Endothelial cell of umbilical vein (primary cell): ENCODE measurements at regions of chr11 and their contacts with region 1.

Region 1: DNA sequence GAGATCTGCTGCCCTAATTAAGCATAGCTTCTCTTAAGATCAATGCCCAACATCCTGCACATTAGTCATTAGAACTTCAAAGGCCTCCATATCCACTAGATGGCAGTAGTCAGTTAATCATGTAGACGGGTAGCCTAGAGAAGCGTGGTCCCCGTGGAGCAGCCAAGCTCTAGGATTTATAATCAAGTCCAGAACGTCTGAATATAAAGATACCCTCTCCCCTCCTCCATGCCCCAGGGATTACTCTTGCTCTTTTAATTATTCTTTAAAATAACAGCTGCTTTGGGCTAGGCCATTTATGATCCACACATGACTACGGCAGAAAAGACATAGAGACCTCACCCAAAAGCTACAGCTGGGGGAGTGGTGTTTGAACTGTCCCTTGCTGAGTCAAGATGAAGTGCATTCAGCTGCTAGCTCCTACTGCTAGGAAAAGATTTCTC is 327.6 kb upstream of the PLET1 start:
- DNase-seq: peak; percentile 73
- H3K4me3 ChIP-seq: no peak overlapping the region
- H3K27ac ChIP-seq: no peak overlapping the region
- H3K4me1 ChIP-seq: no peaks in the 10 kb centered on the region
- H3K27me3 ChIP-seq: no peaks in the 10 kb centered on the region
- CTCF ChIP-seq: peak; percentile 50 to 54
- POLR2A ChIP-seq: no peak

Region 2: GRCh38 chr11:112219476-112220232 is 368.6 kb before region 1 on chr11:
- CTCF ChIA-PET with region 1: interaction called, 11 read pairs
- POLR2A ChIA-PET with region 1: no interaction called
- dilution Hi-C with region 1: no loop called
- intact Hi-C with region 1: loop called (anchors 1 kb)
- DNase-seq: peak; percentile 80
- H3K4me3 ChIP-seq: no peak overlapping the region
- H3K27ac ChIP-seq: no peak overlapping the region
- H3K4me1 ChIP-seq: peaks cover 11% of the 10 kb centered on the region
- H3K27me3 ChIP-seq: no peaks in the 10 kb centered on the region
- CTCF ChIP-seq: peak; percentile 57 to 60
- POLR2A ChIP-seq: no peak

Region 3: DNA sequence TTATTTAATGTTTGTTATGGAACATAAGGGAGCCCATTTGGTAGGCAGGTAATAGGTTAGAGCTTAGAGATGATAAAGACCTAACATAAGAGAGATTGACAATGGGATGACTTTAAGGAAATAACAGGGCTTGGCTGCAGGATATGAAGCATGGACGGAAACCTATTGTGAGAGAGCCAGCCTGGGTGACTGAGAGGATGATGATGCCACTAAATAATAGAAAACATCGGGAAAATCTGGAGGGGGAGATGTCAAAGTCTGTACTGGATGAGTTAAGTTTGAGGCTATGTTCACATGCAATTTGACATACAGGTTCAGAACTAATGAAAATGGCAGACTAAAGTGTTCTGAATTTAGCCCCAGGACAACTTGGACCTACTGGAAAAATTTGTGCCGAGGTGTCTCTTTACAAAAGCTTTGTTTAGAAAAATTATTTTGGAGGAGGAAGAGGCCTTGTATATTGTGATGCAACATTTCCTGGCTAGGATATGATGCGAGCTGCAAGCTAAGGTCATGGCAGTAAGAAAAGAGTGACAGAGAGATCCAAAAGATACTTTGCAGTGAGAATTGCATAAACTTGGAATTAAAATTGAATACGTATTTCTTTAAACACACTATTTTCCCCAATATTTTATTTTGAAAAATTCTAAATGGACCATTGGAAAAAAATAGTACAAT is 11.7 kb after region 1 on chr11:
- CTCF ChIA-PET with region 1: interaction called, 13 read pairs
- POLR2A ChIA-PET with region 1: no interaction called
- dilution Hi-C with region 1: no loop called
- intact Hi-C with region 1: no loop called
- DNase-seq: peak; percentile 5
- H3K4me3 ChIP-seq: no peak overlapping the region
- H3K27ac ChIP-seq: no peak overlapping the region
- H3K4me1 ChIP-seq: peaks cover 6% of the 10 kb centered on the region
- H3K27me3 ChIP-seq: peaks cover 2 to 7% of the 10 kb centered on the region in 2 experiments
- CTCF ChIP-seq: no peak
- POLR2A ChIP-seq: no peak

Region 4: GRCh38 chr11:112734207-112734606 is 145.9 kb after region 1 on chr11:
- CTCF ChIA-PET with region 1: no interaction called
- POLR2A ChIA-PET with region 1: no interaction called
- dilution Hi-C with region 1: no loop called
- intact Hi-C with region 1: no loop called
- DNase-seq: no peak
- H3K4me3 ChIP-seq: no peak overlapping the region
- H3K27ac ChIP-seq: no peak overlapping the region
- H3K4me1 ChIP-seq: no peaks in the 10 kb centered on the region
- H3K27me3 ChIP-seq: no peaks in the 10 kb centered on the region
- CTCF ChIP-seq: no peak
- POLR2A ChIP-seq: no peak

Region 5: DNA sequence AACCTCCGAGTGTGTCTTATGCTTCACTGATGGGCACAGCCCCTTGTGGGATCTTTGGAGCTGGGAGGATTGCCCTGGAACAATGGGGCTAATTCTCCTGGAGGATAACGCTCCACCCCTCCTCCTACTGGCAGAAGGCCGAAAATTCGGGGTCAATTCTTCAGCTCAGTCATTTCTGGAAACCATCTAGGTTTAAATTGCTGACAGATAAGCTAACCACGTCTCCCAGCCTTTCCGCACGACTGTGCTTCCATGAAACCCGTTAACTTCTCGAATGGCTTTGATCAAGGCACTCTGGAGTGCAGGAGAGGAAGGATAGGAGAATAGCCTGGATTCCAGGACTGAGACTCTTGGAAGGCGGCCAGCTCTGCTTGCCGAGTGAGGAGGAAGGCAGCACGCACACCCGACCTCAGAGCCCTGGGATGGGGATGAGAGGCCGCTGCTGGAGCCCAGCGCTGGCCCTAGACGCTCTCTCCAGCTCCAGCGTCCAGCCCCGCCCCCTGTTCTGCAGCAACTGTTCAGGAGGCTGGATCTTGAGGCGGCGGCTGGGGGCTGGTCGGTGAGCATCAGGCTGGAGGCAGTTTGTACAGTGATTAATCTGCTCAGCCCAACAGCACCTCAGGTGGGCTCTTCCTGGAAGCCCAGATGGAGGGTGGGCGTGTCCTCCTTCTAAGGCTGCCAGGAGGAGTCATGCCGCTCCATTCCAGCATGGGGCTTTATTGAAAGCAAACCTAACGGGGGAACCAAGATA is 196.2 kb after region 1 on chr11:
- CTCF ChIA-PET with region 1: no interaction called
- POLR2A ChIA-PET with region 1: no interaction called
- dilution Hi-C with region 1: no loop called
- intact Hi-C with region 1: no loop called
- DNase-seq: no peak
- H3K4me3 ChIP-seq: no peak overlapping the region
- H3K27ac ChIP-seq: no peak overlapping the region
- H3K4me1 ChIP-seq: no peaks in the 10 kb centered on the region
- H3K27me3 ChIP-seq: no peaks in the 10 kb centered on the region
- CTCF ChIP-seq: no peak
- POLR2A ChIP-seq: no peak

Region 6: GRCh38 chr11:112795142-112795815 is 207.0 kb after region 1 on chr11:
- CTCF ChIA-PET with region 1: interaction called, 28 read pairs
- POLR2A ChIA-PET with region 1: no interaction called
- dilution Hi-C with region 1: no loop called
- intact Hi-C with region 1: loop called (anchors 1 kb)
- DNase-seq: no peak
- H3K4me3 ChIP-seq: no peak overlapping the region
- H3K27ac ChIP-seq: no peak overlapping the region
- H3K4me1 ChIP-seq: no peaks in the 10 kb centered on the region
- H3K27me3 ChIP-seq: no peaks in the 10 kb centered on the region
- CTCF ChIP-seq: peak; percentile 25 to 31
- POLR2A ChIP-seq: no peak

Region 7: GRCh38 chr11:113113801-113114706 is 525.8 kb after region 1 on chr11:
- CTCF ChIA-PET with region 1: no interaction called
- POLR2A ChIA-PET with region 1: no interaction called
- dilution Hi-C with region 1: no loop called
- intact Hi-C with region 1: loop called (anchors 1 kb)
- DNase-seq: no peak
- H3K4me3 ChIP-seq: no peak overlapping the region
- H3K27ac ChIP-seq: no peak overlapping the region
- H3K4me1 ChIP-seq: no peaks in the 10 kb centered on the region
- H3K27me3 ChIP-seq: no peaks in the 10 kb centered on the region
- CTCF ChIP-seq: no peak
- POLR2A ChIP-seq: no peak

Region 8: DNA sequence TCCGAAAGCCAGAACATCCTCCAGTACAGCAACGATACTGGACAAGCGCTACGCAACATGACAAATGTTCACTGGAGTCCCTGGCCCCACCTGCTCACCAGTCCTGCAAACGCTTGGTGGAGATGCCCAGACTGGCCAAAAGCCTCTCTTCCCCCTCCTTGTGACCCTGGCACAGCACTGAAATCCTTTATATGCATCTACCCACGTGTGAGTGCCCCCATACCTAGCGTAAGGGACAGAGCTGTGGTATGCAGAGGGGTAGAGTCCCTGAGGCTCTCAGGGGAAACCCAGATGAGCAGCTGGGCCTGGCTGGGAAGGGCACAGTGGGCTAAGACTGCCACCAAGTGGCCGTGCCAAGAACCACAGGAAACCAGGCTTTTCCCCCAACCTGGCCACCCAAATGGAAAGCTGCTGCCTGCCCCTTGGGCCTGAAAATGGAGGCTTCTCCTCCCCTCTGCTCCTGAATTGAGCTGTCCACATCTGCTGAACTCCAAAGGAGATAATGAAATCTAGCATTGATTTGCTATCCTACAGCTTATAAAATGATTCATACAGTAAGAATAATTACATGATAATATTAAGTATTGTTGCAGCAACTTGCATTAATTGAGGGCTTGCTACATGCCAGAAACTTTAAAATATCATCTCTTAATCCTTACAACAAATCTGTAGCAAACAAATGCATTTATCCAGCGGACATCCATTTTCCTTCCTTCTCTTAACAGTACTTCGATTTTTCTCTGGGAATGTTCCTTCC is 701.3 kb after region 1 on chr11:
- CTCF ChIA-PET with region 1: interaction called, 401 read pairs
- POLR2A ChIA-PET with region 1: interaction called, 5 read pairs
- dilution Hi-C with region 1: no loop called
- intact Hi-C with region 1: loop called (anchors 1 kb)
- DNase-seq: peak; percentile 59
- H3K4me3 ChIP-seq: no peak overlapping the region
- H3K27ac ChIP-seq: no peak overlapping the region
- H3K4me1 ChIP-seq: no peaks in the 10 kb centered on the region
- H3K27me3 ChIP-seq: no peaks in the 10 kb centered on the region
- CTCF ChIP-seq: peak; percentile 76 to 92
- POLR2A ChIP-seq: no peak